CD8-positive, alpha-beta T cell (primary cell): ENCODE measurements at regions of chr4 and their contacts with region 1.

Region 1: GRCh38 chr4:48127682-48128394 is 6.2 kb downstream of the TXK start:
- DNase-seq: peak; percentile 27 to 81 (median 73)
- ATAC-seq: peak; percentile 67
- H3K4me3 ChIP-seq: peak overlapping the region in 1 of 2 experiments; percentile 18
- H3K4me3 Mint-ChIP-seq: peak overlapping the region; percentile 91
- H3K27ac ChIP-seq: peak overlapping the region; percentile 33 to 67
- H3K27ac Mint-ChIP-seq: peak overlapping the region; percentile 92
- H3K4me1 ChIP-seq: peaks cover 76% of the 10 kb centered on the region
- H3K4me1 Mint-ChIP-seq: peaks cover 87% of the 10 kb centered on the region
- H3K27me3 ChIP-seq: no peaks in the 10 kb centered on the region
- H3K27me3 Mint-ChIP-seq: no peaks in the 10 kb centered on the region
- CTCF ChIP-seq: peak; percentile 59

Region 2: DNA sequence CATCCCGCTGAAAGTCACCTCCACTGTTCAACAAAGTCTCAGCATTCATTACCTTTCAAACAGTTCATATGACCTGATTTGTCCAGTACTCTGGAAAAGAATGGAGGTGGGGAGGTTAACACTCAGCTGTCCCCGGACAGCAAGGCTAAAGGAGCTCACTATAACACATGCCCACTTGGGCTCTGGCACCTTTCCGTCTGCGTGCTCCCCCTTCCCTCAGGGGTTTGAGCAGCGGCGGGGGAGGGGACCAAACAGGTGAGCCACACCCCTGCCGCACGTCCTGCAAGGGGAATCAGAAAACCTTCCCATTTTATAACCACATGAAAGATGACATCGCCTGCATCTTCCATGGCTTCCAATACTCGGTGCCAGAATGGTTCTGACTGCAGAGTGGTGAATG is 173.6 kb before region 1 on chr4:
- CTCF ChIA-PET with region 1: no interaction called
- POLR2A ChIA-PET with region 1: no interaction called
- intact Hi-C with region 1: no loop called
- DNase-seq: no peak
- ATAC-seq: no peak
- H3K4me3 ChIP-seq: no peak overlapping the region
- H3K4me3 Mint-ChIP-seq: no peak overlapping the region
- H3K27ac ChIP-seq: no peak overlapping the region
- H3K27ac Mint-ChIP-seq: no peak overlapping the region
- H3K4me1 ChIP-seq: no peaks in the 10 kb centered on the region
- H3K4me1 Mint-ChIP-seq: no peaks in the 10 kb centered on the region
- H3K27me3 ChIP-seq: no peaks in the 10 kb centered on the region
- H3K27me3 Mint-ChIP-seq: peaks cover 5% of the 10 kb centered on the region
- CTCF ChIP-seq: no peak

Region 3: GRCh38 chr4:48162162-48162561 is 34.3 kb after region 1 on chr4:
- CTCF ChIA-PET with region 1: no interaction called
- POLR2A ChIA-PET with region 1: no interaction called
- intact Hi-C with region 1: no loop called
- DNase-seq: no peak
- ATAC-seq: no peak
- H3K4me3 ChIP-seq: no peak overlapping the region
- H3K4me3 Mint-ChIP-seq: no peak overlapping the region
- H3K27ac ChIP-seq: no peak overlapping the region
- H3K27ac Mint-ChIP-seq: no peak overlapping the region
- H3K4me1 ChIP-seq: no peaks in the 10 kb centered on the region
- H3K4me1 Mint-ChIP-seq: peaks cover 3% of the 10 kb centered on the region
- H3K27me3 ChIP-seq: no peaks in the 10 kb centered on the region
- H3K27me3 Mint-ChIP-seq: no peaks in the 10 kb centered on the region
- CTCF ChIP-seq: no peak

Region 4: DNA sequence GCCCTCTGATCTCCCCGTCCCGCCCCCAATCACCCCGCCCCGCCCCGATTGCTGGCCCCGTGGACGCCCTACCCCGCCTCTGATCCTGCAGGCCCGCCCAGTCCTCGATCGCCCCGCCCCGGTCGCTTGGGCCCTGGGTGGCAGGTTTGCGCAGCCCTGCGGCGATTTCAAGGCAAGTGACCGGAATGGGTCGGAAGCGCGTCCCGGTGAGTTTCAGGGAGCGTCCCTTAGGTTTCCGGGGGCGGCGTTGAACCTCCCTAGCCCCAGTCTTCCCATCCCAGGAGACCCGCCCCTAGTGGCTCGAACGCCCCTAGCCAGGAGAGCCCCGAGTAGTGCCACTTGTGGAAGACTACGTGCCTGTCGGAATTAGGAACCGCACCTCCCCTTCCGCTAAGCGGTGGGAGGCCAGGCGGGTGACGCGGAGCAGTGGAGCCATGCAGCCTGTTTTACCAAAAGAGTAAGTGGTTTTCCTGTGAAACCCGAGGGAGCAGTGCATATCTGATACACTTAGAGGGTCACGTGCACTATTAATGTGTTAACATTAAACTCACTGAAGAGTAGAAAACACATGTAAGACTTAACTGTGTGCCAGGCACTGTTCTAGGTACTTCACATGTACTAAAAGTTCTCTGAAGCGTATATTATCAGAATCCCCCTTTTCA is 142.2 kb after region 1 on chr4:
- CTCF ChIA-PET with region 1: interaction called, 4 read pairs
- POLR2A ChIA-PET with region 1: no interaction called
- intact Hi-C with region 1: loop called (anchors 5 kb)
- DNase-seq: peak; percentile 74 to 89 (median 85)
- ATAC-seq: peak; percentile 88
- H3K4me3 ChIP-seq: peak overlapping the region; percentile 68 to 98
- H3K4me3 Mint-ChIP-seq: peak overlapping the region; percentile 96
- H3K27ac ChIP-seq: peak overlapping the region; percentile 47 to 60
- H3K27ac Mint-ChIP-seq: peak overlapping the region; percentile 80
- H3K4me1 ChIP-seq: peaks cover 12% of the 10 kb centered on the region
- H3K4me1 Mint-ChIP-seq: peaks cover 18% of the 10 kb centered on the region
- H3K27me3 ChIP-seq: no peaks in the 10 kb centered on the region
- H3K27me3 Mint-ChIP-seq: no peaks in the 10 kb centered on the region
- CTCF ChIP-seq: no peak